CD4-positive, alpha-beta memory T cell (primary cell): ENCODE measurements at regions of chr7 and their contacts with region 1.

Region 1: DNA sequence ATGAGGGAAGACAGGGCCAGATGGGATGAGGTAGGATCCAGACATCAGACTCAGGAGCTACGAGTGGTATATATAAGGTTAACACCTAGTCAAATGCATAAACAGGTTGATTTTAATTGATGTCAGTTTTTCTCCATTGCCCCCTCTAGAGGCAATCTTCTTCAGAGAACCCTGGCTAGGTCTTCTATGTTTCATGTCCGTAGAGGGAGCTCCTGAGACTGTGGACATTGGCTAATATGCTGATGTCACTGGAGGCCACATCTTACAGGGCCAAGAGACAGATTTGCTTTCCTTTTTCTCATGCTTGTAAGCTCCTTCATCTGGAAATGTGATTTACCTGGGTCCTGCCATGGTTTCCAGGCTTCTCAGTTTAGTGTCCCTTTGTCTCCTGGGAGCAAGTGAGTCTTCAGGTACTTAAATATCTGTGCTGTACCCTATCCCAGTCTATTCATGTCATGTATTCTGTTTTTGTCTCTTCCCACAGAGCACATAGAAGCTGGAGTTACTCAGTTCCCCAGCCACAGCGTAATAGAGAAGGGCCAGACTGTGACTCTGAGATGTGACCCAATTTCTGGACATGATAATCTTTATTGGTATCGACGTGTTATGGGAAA is 161.6 kb upstream of the PRSS1 start:
- DNase-seq: peak in 4 of 5 donors; percentile 25 to 35 (median 31)
- H3K4me3 ChIP-seq: no peak overlapping the region
- H3K4me3 Mint-ChIP-seq: peak overlapping the region in 4 of 8 donors; percentile 31 to 61 (median 44)
- H3K27ac ChIP-seq: no peak overlapping the region
- H3K27ac Mint-ChIP-seq: peak overlapping the region in 2 of 7 donors; percentile 12 to 21
- H3K4me1 ChIP-seq: no peaks in the 10 kb centered on the region
- H3K4me1 Mint-ChIP-seq: peaks cover 3 to 7% (median 4%) of the 10 kb centered on the region in 4 donors
- H3K27me3 ChIP-seq: no peaks in the 10 kb centered on the region
- H3K27me3 Mint-ChIP-seq: no peaks in the 10 kb centered on the region

Region 2: GRCh38 chr7:141558544-141559183 is 1029.0 kb before region 1 on chr7:
- CTCF ChIA-PET with region 1: no interaction called
- POLR2A ChIA-PET with region 1: no interaction called
- intact Hi-C with region 1: no loop called
- DNase-seq: peak; percentile 46 to 65 (median 54)
- H3K4me3 ChIP-seq: no peak overlapping the region
- H3K4me3 Mint-ChIP-seq: peak overlapping the region in 7 of 8 donors; percentile 30 to 64 (median 57)
- H3K27ac ChIP-seq: peak overlapping the region; percentile 3
- H3K27ac Mint-ChIP-seq: peak overlapping the region; percentile 82 to 95 (median 86)
- H3K4me1 ChIP-seq: peaks cover 21% of the 10 kb centered on the region
- H3K4me1 Mint-ChIP-seq: peaks cover 19 to 50% (median 47%) of the 10 kb centered on the region in 4 donors
- H3K27me3 ChIP-seq: no peaks in the 10 kb centered on the region
- H3K27me3 Mint-ChIP-seq: no peaks in the 10 kb centered on the region

Region 3: DNA sequence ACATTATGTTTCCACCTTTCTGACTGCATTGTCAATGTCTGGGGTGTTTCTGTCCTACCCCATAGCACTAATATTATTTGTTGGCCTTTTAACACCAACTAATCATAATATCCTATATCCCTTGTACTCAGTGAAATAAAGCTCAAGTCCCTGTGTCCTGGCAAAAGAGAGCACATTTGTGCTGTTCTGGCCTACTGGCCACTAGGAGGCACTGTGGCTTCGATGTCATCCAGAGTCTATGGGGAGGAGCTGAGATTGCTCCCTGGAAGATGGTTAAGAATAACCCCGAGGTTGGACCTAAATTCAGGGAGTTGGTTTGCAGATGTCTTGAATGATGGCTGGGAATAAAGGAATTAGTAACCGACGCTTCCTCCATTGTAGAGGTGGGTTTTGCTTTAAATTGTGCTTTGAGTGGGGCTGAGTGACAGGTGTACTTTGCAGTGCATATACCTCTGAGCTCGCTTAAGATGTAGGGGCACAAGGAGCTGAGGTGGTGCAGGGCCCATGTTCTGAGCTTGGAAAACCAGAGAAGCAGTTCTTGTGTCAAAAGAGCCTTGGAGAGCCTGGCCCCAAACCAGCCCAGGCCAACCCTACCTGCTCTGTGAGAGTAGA is 29.6 kb before region 1 on chr7:
- CTCF ChIA-PET with region 1: interaction called, 14 read pairs
- POLR2A ChIA-PET with region 1: no interaction called
- intact Hi-C with region 1: no loop called
- DNase-seq: peak; percentile 31 to 47 (median 41)
- H3K4me3 ChIP-seq: no peak overlapping the region
- H3K4me3 Mint-ChIP-seq: peak overlapping the region in 7 of 8 donors; percentile 17 to 77 (median 66)
- H3K27ac ChIP-seq: no peak overlapping the region
- H3K27ac Mint-ChIP-seq: peak overlapping the region in 4 of 7 donors; percentile 3 to 72 (median 37)
- H3K4me1 ChIP-seq: no peaks in the 10 kb centered on the region
- H3K4me1 Mint-ChIP-seq: peaks cover 0 to 4% (median 2%) of the 10 kb centered on the region in 4 donors
- H3K27me3 ChIP-seq: no peaks in the 10 kb centered on the region
- H3K27me3 Mint-ChIP-seq: peaks cover 2 to 3% of the 10 kb centered on the region in 2 donors

Region 4: GRCh38 chr7:142603870-142604448 is 16.3 kb after region 1 on chr7:
- CTCF ChIA-PET with region 1: interaction called, 10 read pairs
- POLR2A ChIA-PET with region 1: no interaction called
- intact Hi-C with region 1: no loop called
- DNase-seq: peak; percentile 50 to 59 (median 53)
- H3K4me3 ChIP-seq: no peak overlapping the region
- H3K4me3 Mint-ChIP-seq: peak overlapping the region in 4 of 8 donors; percentile 11 to 58 (median 28)
- H3K27ac ChIP-seq: no peak overlapping the region
- H3K27ac Mint-ChIP-seq: peak overlapping the region in 3 of 7 donors; percentile 13 to 57 (median 24)
- H3K4me1 ChIP-seq: no peaks in the 10 kb centered on the region
- H3K4me1 Mint-ChIP-seq: peaks cover under 1 to 12% (median 5%) of the 10 kb centered on the region in 4 donors
- H3K27me3 ChIP-seq: no peaks in the 10 kb centered on the region
- H3K27me3 Mint-ChIP-seq: no peaks in the 10 kb centered on the region